Activated B cell treated with CpG ODN at 0.5 μM for 24 hours (primary cell): ENCODE measurements at regions of chr12 and their contacts with region 1.

Region 1: GRCh38 chr12:76037130-76038103 is 5.8 kb upstream of the PHLDA1 start:
- DNase-seq: no peak
- ATAC-seq: peak; percentile 79
- H3K4me3 Mint-ChIP-seq: no peak overlapping the region
- H3K27ac Mint-ChIP-seq: no peak overlapping the region
- H3K4me1 Mint-ChIP-seq: peaks cover 9% of the 10 kb centered on the region
- H3K27me3 Mint-ChIP-seq: no peaks in the 10 kb centered on the region
- CTCF ChIP-seq: peak; percentile 55

Region 2: DNA sequence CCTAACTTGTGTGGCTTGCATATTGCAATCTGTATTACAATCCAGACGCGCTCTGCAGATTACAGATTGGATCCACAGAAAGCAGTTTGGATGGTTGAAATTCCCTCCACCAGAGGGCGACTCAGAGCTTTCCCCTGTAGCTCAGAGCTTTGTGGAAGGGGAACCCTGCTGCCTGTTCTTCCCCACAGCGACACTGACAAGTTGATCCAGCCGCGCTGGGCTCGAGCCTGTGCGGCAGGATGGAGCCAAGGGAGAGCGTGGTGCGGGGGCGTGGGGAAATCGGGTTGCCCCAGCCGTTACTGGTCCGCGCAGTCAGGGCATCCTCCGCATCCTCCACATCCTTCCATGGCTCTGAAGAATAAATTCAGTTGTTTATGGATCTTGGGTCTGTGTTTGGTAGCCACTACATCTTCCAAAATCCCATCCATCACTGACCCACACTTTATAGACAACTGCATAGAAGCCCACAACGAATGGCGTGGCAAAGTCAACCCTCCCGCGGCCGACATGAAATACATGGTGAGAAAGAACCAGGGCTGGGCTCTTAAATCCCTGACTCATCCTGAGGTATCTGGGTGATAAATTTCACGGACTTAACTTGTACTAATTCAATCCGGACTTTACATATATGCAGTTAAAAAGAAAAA is 702.9 kb before region 1 on chr12 and contains the start of gene GLIPR1L1:
- CTCF ChIA-PET with region 1: interaction called, 7 read pairs
- POLR2A ChIA-PET with region 1: no interaction called
- intact Hi-C with region 1: loop called (anchors 1 kb)
- DNase-seq: peak; percentile 46
- ATAC-seq: peak; percentile 75
- H3K4me3 Mint-ChIP-seq: peak within 1 kb of the TSS; percentile 60
- H3K27ac Mint-ChIP-seq: no peak within 1 kb of the TSS
- H3K4me1 Mint-ChIP-seq: peaks cover 16% of the 10 kb centered on the region
- H3K27me3 Mint-ChIP-seq: peaks cover 23% of the 10 kb centered on the region
- CTCF ChIP-seq: peak; percentile 87
- total RNA-seq, gene GLIPR1L1: not detected in 2 replicates

Region 3: DNA sequence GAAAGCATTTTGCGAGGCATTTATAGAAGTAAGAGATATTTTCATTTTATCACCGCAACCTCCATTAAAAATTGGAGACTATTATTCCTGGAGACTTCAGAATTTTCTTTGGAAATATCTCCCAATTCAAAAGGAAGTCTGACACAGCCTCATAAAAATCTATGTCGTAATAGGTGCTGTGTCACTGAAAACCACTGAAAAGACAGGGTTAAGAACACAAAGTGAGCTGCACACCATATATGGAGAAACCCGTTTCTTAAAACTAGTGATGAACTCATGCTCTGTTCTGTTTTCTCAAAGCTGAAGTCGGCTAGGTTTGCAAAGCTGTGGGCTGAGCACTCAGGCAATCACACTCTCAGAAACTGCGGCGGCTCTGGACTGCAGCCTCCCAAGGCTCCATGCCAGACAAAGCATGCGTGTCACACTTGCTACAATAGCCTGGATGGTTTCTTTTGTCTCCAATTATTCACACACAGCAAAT is 556.9 kb before region 1 on chr12 and contains the start of gene GLIPR1:
- CTCF ChIA-PET with region 1: interaction called, 5 read pairs
- POLR2A ChIA-PET with region 1: interaction called, 3 read pairs
- intact Hi-C with region 1: loop called (anchors 1 kb)
- DNase-seq: peak; percentile 40
- ATAC-seq: peak; percentile 79
- H3K4me3 Mint-ChIP-seq: peak within 1 kb of the TSS; percentile 96
- H3K27ac Mint-ChIP-seq: peak within 1 kb of the TSS; percentile 97
- H3K4me1 Mint-ChIP-seq: peaks cover 96% of the 10 kb centered on the region
- H3K27me3 Mint-ChIP-seq: no peaks in the 10 kb centered on the region
- CTCF ChIP-seq: no peak
- total RNA-seq, gene GLIPR1: 44.7 and 45.4 TPM in 2 replicates

Region 4: GRCh38 chr12:75526655-75527511 is 510.5 kb before region 1 on chr12:
- CTCF ChIA-PET with region 1: interaction called, 121 read pairs
- POLR2A ChIA-PET with region 1: interaction called, 9 read pairs
- intact Hi-C with region 1: loop called (anchors 1 kb)
- DNase-seq: no peak
- ATAC-seq: peak; percentile 74
- H3K4me3 Mint-ChIP-seq: no peak overlapping the region
- H3K27ac Mint-ChIP-seq: no peak overlapping the region
- H3K4me1 Mint-ChIP-seq: peaks cover 6% of the 10 kb centered on the region
- H3K27me3 Mint-ChIP-seq: peaks cover 31% of the 10 kb centered on the region
- CTCF ChIP-seq: no peak

Region 5: GRCh38 chr12:75814851-75815754 is 222.3 kb before region 1 on chr12:
- CTCF ChIA-PET with region 1: interaction called, 5 read pairs
- POLR2A ChIA-PET with region 1: no interaction called
- intact Hi-C with region 1: loop called (anchors 2 kb)
- DNase-seq: no peak
- ATAC-seq: peak; percentile 82
- H3K4me3 Mint-ChIP-seq: no peak overlapping the region
- H3K27ac Mint-ChIP-seq: no peak overlapping the region
- H3K4me1 Mint-ChIP-seq: peaks cover 13% of the 10 kb centered on the region
- H3K27me3 Mint-ChIP-seq: no peaks in the 10 kb centered on the region
- CTCF ChIP-seq: no peak

Region 6: DNA sequence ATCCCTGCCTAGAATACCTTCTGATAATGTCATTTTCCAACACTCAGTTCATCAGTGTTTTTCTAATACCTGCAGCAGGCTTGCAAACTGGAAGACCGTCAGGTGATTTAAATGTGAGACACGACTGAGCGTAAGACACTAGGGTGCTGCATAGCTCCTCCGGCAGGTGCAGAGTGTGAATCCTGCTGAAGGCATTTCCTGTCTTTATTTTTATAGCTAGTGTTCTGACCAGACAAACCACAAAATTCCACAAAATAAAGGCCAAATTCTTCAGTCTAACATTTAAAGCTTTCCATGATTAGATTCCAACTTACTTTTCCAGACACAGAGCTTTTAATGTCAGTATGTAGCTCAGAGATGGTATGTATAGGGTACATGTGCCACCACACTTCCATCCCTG is 240.1 kb after region 1 on chr12:
- CTCF ChIA-PET with region 1: no interaction called
- POLR2A ChIA-PET with region 1: no interaction called
- intact Hi-C with region 1: no loop called
- DNase-seq: no peak
- ATAC-seq: no peak
- H3K4me3 Mint-ChIP-seq: no peak overlapping the region
- H3K27ac Mint-ChIP-seq: no peak overlapping the region
- H3K4me1 Mint-ChIP-seq: no peaks in the 10 kb centered on the region
- H3K27me3 Mint-ChIP-seq: peaks cover 2% of the 10 kb centered on the region
- CTCF ChIP-seq: no peak

Region 7: GRCh38 chr12:76299536-76300296 is 262.3 kb after region 1 on chr12:
- CTCF ChIA-PET with region 1: no interaction called
- POLR2A ChIA-PET with region 1: no interaction called
- intact Hi-C with region 1: no loop called
- DNase-seq: no peak
- ATAC-seq: no peak
- H3K4me3 Mint-ChIP-seq: no peak overlapping the region
- H3K27ac Mint-ChIP-seq: no peak overlapping the region
- H3K4me1 Mint-ChIP-seq: no peaks in the 10 kb centered on the region
- H3K27me3 Mint-ChIP-seq: no peaks in the 10 kb centered on the region
- CTCF ChIP-seq: no peak